AG04449 (cell line): ENCODE measurements at regions of chr18 and their contacts with region 1.

Region 1: GRCh38 chr18:48475635-48476549 is 62.9 kb upstream of the CTIF start:
- DNase-seq: peak; percentile 46
- H3K4me3 ChIP-seq: no peak overlapping the region
- CTCF ChIP-seq: peak; percentile 74

Region 2: GRCh38 chr18:48488388-48488850 is 12.5 kb after region 1 on chr18:
- CTCF ChIA-PET with region 1: interaction called, 85 read pairs
- POLR2A ChIA-PET with region 1: no interaction called
- DNase-seq: peak; percentile 73
- H3K4me3 ChIP-seq: no peak overlapping the region
- CTCF ChIP-seq: no peak

Region 3: GRCh38 chr18:48600456-48601090 is 124.7 kb after region 1 on chr18:
- CTCF ChIA-PET with region 1: interaction called, 10 read pairs
- POLR2A ChIA-PET with region 1: no interaction called
- DNase-seq: no peak
- H3K4me3 ChIP-seq: no peak overlapping the region
- CTCF ChIP-seq: no peak

Region 4: GRCh38 chr18:48629730-48630324 is 153.9 kb after region 1 on chr18:
- CTCF ChIA-PET with region 1: interaction called, 26 read pairs
- POLR2A ChIA-PET with region 1: no interaction called
- DNase-seq: peak; percentile 98
- H3K4me3 ChIP-seq: no peak overlapping the region
- CTCF ChIP-seq: no peak

Region 5: GRCh38 chr18:48657447-48658120 is 181.7 kb after region 1 on chr18:
- CTCF ChIA-PET with region 1: interaction called, 286 read pairs
- POLR2A ChIA-PET with region 1: interaction called, 4 read pairs
- DNase-seq: no peak
- H3K4me3 ChIP-seq: no peak overlapping the region
- CTCF ChIP-seq: no peak

Region 6: GRCh38 chr18:48687346-48688042 is 211.6 kb after region 1 on chr18:
- CTCF ChIA-PET with region 1: interaction called, 11 read pairs
- POLR2A ChIA-PET with region 1: no interaction called
- DNase-seq: no peak
- H3K4me3 ChIP-seq: no peak overlapping the region
- CTCF ChIP-seq: no peak